ENCODE measurements at regions of chr22 and their contacts with region 1.

Region 1: GRCh38 chr22:50185384-50186087 is at the start of gene TRABD:
- DNase-seq: peak; percentile 95
- ATAC-seq: peak; percentile 80
- H3K4me3 Mint-ChIP-seq: peak within 1 kb of the TSS; percentile 84
- H3K27ac Mint-ChIP-seq: peak within 1 kb of the TSS; percentile 92
- H3K4me1 Mint-ChIP-seq: peaks cover 27% of the 10 kb centered on the region
- H3K27me3 Mint-ChIP-seq: no peaks in the 10 kb centered on the region
- total RNA-seq, gene TRABD: 60.7 to 74.5 TPM

Region 2: GRCh38 chr22:49917974-49918910 is 267.3 kb before region 1 on chr22 and contains the starts of genes ALG12 and CRELD2:
- CTCF ChIA-PET with region 1: interaction called, 3 read pairs
- POLR2A ChIA-PET with region 1: no interaction called
- intact Hi-C with region 1: loop called in 1 of 2 experiments (anchors 1 kb)
- DNase-seq: peak; percentile 99
- ATAC-seq: peak; percentile 99
- H3K4me3 Mint-ChIP-seq: peak within 1 kb of the TSS; percentile 79
- H3K27ac Mint-ChIP-seq: peak within 1 kb of the TSS; percentile 63
- H3K4me1 Mint-ChIP-seq: peaks cover 18% of the 10 kb centered on the region
- H3K27me3 Mint-ChIP-seq: no peaks in the 10 kb centered on the region
- total RNA-seq, gene ALG12: 13.6 to 13.7 TPM
- total RNA-seq, gene CRELD2: 15.2 to 16.4 TPM

Region 3: DNA sequence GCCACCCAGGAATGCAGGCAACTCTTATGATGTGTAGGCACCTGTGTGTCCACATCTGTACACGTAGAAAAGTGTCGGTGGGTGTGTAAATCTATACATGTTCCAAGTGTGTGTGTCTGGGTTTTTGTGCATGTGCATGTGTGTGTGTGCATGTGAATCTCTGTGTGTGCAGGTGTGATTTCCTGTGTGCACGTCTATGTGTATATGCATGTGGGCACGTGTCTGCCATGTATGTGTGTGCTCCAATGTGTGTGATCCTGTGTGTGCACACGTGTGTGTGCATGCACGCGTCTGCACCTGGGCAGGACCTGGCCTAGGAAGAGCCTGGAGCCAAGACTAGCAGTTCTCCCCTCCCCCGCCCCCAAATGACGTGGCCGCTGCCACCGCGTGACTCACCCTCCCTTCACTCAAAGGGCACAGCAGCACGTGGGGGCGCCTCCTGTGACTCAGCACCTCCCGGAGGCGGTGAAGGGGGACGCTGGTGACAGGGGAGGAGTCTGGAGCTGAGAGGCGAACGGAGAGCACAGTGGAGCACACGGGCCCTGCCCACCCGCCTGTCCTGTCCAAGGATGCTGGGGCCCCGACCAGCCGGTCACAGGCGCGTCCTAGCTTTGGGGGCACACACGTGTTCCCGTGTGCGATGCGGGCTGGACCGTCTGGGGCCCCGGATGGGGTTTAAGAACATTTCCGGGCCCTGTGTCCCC is 214.9 kb before region 1 on chr22:
- CTCF ChIA-PET with region 1: no interaction called
- POLR2A ChIA-PET with region 1: no interaction called
- intact Hi-C with region 1: loop called in 1 of 2 experiments (anchors 2 kb)
- DNase-seq: peak; percentile 99
- ATAC-seq: peak; percentile 87
- H3K4me3 Mint-ChIP-seq: no peak overlapping the region
- H3K27ac Mint-ChIP-seq: peak overlapping the region; percentile 93
- H3K4me1 Mint-ChIP-seq: peaks cover 38% of the 10 kb centered on the region
- H3K27me3 Mint-ChIP-seq: no peaks in the 10 kb centered on the region

Region 4: DNA sequence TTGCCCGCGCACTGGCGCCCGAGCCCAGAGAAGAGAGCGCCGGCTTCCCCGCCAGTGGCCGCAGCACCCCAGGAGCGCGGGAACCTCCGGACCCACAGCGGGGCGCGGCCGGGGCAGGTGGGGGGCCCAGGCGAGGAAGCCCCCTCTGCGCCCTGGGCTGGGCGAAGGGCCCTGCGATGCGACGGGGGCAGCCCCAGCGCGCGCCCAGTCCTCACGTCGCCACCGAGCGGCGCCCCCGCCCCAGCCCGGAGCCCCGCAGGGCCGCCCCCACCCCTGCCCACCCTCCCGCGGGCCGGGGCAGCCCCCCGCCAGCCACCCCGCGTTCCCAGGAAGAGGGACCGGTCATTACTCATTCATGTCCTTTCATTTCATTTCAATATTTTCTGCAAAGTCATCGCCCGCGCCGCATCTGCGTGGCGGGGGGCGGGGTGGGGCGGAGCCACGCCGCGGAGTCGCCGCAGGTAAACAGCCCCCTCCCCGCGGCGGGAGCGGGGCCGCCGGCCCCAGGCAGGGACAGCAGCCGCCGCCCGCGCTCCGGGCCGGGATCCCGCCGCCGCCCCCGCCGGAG is 15.7 kb before region 1 on chr22:
- CTCF ChIA-PET with region 1: no interaction called
- POLR2A ChIA-PET with region 1: interaction called, 8 read pairs
- intact Hi-C with region 1: loop called in 1 of 2 experiments (anchors 1 kb)
- DNase-seq: peak; percentile 83
- ATAC-seq: peak; percentile 83
- H3K4me3 Mint-ChIP-seq: peak overlapping the region; percentile 49
- H3K27ac Mint-ChIP-seq: no peak overlapping the region
- H3K4me1 Mint-ChIP-seq: peaks cover 2% of the 10 kb centered on the region
- H3K27me3 Mint-ChIP-seq: peaks cover 30% of the 10 kb centered on the region

Region 5: DNA sequence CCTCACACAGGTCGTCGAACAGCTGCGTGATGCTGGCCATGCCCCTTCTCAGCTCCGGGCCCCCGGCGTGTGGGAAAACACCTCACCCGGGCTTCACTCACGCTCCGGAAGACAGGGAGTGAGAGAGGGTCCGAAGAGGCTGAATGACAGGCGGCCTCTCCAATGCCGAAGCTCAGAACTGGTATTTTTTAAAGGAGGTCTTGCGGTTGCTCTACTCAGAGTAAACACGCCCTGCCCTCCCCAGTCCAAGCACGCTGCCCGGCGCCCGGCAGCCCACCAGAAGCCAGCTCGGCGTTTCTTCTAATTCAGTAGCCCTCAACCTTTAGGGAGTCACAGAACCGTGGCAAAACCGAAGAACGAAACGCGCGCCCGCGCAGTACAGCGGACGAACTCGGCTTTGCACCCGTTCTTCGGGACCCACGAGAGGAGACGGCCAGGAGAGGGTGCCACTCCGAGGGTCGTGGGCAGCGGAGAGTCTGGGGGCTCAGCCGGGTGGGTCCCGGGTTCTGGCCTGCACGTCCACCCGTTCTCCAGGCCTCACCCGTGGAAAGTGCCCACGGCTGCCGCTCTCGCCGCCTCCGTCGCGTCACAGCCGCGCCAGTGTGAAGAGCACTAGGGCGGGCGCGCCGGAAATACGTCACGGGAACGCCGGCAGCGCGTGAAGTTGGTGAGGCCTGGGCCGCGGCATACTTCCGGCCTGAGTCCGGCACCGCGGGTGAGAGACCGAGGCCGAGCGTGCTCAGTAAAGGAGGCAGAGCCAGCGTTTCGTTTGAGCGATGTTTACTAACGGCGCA is 59.1 kb after region 1 on chr22 and contains the start of gene TUBGCP6:
- CTCF ChIA-PET with region 1: interaction called, 6 read pairs
- POLR2A ChIA-PET with region 1: no interaction called
- intact Hi-C with region 1: loop called (anchors 1 to 5 kb)
- DNase-seq: peak; percentile 96
- ATAC-seq: peak; percentile 80
- H3K4me3 Mint-ChIP-seq: peak within 1 kb of the TSS; percentile 94
- H3K27ac Mint-ChIP-seq: peak within 1 kb of the TSS; percentile 100
- H3K4me1 Mint-ChIP-seq: peaks cover 23% of the 10 kb centered on the region
- H3K27me3 Mint-ChIP-seq: no peaks in the 10 kb centered on the region
- total RNA-seq, gene TUBGCP6: 42.2 to 49.2 TPM

Measured in activated CD4-positive, alpha-beta T cell treated with anti-CD3 and anti-CD28 coated beads for 36 hours (primary cell).